Naive thymus-derived CD4-positive, alpha-beta T cell (primary cell): ENCODE measurements at regions of chr15 and their contacts with region 1.

Region 1: DNA sequence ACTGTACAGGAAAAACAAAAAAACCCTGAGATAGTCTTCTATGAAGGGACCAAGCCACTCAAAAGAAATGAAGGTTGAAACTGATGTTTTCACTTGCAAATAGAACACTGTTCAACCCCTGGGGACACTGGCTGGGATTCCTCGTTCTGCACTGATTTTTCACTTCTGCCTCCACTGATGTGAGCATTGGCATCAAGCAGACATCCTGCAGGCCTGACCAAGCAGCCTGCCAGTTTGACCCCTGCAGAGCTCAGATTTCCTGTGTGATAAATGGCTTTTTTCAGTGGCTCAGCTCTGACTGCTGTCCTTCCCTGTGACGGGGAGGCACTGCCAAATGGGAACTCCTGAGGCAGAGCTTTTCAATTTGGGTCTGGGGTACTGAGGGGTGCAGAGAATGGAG is 50.0 kb downstream of the RASGRP1 start:
- DNase-seq: no peak
- ATAC-seq: no peak
- H3K4me3 ChIP-seq: no peak overlapping the region
- H3K4me3 Mint-ChIP-seq: no peak overlapping the region
- H3K27ac ChIP-seq: peak overlapping the region; percentile 29
- H3K27ac Mint-ChIP-seq: peak overlapping the region; percentile 29 to 84 (median 68)
- H3K4me1 ChIP-seq: peaks cover 0 to 4% of the 10 kb centered on the region in 2 donors
- H3K4me1 Mint-ChIP-seq: peaks cover 5 to 51% (median 15%) of the 10 kb centered on the region in 7 donors
- H3K27me3 ChIP-seq: no peaks in the 10 kb centered on the region
- H3K27me3 Mint-ChIP-seq: no peaks in the 10 kb centered on the region

Region 2: DNA sequence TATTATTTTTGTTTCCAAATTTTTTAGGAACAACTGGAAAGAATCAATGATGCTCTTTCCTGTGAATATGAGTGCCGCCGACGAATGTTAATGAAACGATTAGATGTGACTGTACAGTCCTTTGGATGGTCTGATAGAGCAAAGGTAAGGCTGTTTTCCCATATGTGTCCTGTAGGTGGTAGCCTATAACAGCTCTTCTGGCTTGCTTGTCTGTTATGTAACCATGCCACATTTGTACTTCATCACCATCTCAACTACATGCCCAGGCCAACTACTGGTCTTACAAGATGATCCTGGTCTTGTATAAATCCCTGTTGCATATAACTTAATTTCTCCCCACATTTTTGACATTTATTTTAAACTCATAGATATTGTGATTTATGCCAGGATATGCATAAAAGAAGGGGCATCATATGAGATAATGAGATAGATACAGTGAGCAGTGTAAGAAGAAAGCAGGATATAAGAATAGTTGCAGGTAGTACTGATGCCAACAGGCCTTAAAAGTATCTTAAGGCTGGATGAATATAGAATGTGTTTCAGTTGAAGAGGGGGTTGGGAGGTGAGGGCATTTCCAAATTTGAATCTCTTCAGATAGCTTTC is 40.3 kb before region 1 on chr15:
- CTCF ChIA-PET with region 1: no interaction called
- POLR2A ChIA-PET with region 1: no interaction called
- intact Hi-C with region 1: loop called in 1 of 2 experiments (anchors 2 kb)
- DNase-seq: peak in 7 of 9 donors; percentile 53 to 75 (median 62)
- ATAC-seq: peak; percentile 100
- H3K4me3 ChIP-seq: no peak overlapping the region
- H3K4me3 Mint-ChIP-seq: peak overlapping the region in 2 of 10 donors; percentile 4 to 10
- H3K27ac ChIP-seq: no peak overlapping the region
- H3K27ac Mint-ChIP-seq: peak overlapping the region; percentile 10 to 88 (median 81)
- H3K4me1 ChIP-seq: peaks cover 0 to 5% of the 10 kb centered on the region in 2 donors
- H3K4me1 Mint-ChIP-seq: peaks cover 10 to 23% (median 13%) of the 10 kb centered on the region in 7 donors
- H3K27me3 ChIP-seq: no peaks in the 10 kb centered on the region
- H3K27me3 Mint-ChIP-seq: no peaks in the 10 kb centered on the region

Region 3: DNA sequence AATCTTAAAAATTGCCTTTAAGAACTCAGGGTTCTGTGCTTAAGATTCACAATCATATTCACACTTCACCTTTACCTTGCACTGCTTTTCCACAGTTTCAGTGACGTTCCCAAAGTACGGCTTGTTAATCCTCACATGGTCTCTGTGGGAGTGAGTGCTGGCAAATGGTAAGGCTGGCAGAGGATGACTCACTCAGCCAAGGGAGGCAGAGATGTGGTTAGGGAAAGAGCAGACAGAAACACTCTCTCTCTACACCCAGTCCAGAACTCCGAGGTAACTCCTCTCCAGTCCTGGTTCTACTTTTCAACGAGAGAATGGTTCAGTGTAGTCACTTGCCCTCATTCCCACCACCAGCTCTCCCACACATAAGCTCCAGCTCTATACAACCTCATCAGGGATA is 16.9 kb after region 1 on chr15:
- CTCF ChIA-PET with region 1: no interaction called
- POLR2A ChIA-PET with region 1: no interaction called
- intact Hi-C with region 1: loop called in 1 of 2 experiments (anchors 2 kb)
- DNase-seq: no peak
- ATAC-seq: no peak
- H3K4me3 ChIP-seq: no peak overlapping the region
- H3K4me3 Mint-ChIP-seq: peak overlapping the region in 7 of 10 donors; percentile 1 to 58 (median 44)
- H3K27ac ChIP-seq: no peak overlapping the region
- H3K27ac Mint-ChIP-seq: peak overlapping the region in 8 of 9 donors; percentile 42 to 95 (median 78)
- H3K4me1 ChIP-seq: peaks cover 58 to 64% of the 10 kb centered on the region in 2 donors
- H3K4me1 Mint-ChIP-seq: peaks cover 67 to 99% (median 97%) of the 10 kb centered on the region in 7 donors
- H3K27me3 ChIP-seq: no peaks in the 10 kb centered on the region
- H3K27me3 Mint-ChIP-seq: no peaks in the 10 kb centered on the region

Region 4: DNA sequence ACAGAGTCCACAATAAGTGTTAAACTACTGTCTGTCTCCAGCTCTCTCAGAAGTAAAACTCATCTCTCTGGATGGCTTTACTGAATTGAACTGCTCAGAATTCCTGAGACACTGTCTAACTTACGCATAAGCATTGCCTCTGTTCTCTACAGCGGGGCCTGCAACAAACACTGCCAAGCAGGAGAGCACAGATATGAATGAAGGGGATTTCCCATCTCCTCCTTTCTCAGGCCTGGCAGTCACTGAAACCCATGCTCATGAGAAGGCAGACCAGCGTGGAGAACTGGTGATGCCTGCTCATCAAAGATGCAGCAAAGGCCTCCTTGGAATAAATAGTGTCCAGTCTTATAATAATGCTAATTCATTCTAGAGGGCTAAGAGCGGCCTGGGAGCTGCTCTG is 39.8 kb after region 1 on chr15:
- CTCF ChIA-PET with region 1: no interaction called
- POLR2A ChIA-PET with region 1: interaction called, 3 read pairs
- intact Hi-C with region 1: loop called in 1 of 2 experiments (anchors 5 kb)
- DNase-seq: peak in 2 of 9 donors; percentile 30 to 41
- ATAC-seq: peak; percentile 60
- H3K4me3 ChIP-seq: peak overlapping the region; percentile 19
- H3K4me3 Mint-ChIP-seq: peak overlapping the region; percentile 19 to 97 (median 72)
- H3K27ac ChIP-seq: peak overlapping the region; percentile 91
- H3K27ac Mint-ChIP-seq: peak overlapping the region; percentile 73 to 98 (median 89)
- H3K4me1 ChIP-seq: peaks cover 84 to 89% of the 10 kb centered on the region in 2 donors
- H3K4me1 Mint-ChIP-seq: peaks cover 62 to 95% (median 93%) of the 10 kb centered on the region in 7 donors
- H3K27me3 ChIP-seq: no peaks in the 10 kb centered on the region
- H3K27me3 Mint-ChIP-seq: no peaks in the 10 kb centered on the region